Heart left ventricle (tissue), 16 donors: ENCODE measurements at regions of chr1 and their contacts with region 1.

Region 1: DNA sequence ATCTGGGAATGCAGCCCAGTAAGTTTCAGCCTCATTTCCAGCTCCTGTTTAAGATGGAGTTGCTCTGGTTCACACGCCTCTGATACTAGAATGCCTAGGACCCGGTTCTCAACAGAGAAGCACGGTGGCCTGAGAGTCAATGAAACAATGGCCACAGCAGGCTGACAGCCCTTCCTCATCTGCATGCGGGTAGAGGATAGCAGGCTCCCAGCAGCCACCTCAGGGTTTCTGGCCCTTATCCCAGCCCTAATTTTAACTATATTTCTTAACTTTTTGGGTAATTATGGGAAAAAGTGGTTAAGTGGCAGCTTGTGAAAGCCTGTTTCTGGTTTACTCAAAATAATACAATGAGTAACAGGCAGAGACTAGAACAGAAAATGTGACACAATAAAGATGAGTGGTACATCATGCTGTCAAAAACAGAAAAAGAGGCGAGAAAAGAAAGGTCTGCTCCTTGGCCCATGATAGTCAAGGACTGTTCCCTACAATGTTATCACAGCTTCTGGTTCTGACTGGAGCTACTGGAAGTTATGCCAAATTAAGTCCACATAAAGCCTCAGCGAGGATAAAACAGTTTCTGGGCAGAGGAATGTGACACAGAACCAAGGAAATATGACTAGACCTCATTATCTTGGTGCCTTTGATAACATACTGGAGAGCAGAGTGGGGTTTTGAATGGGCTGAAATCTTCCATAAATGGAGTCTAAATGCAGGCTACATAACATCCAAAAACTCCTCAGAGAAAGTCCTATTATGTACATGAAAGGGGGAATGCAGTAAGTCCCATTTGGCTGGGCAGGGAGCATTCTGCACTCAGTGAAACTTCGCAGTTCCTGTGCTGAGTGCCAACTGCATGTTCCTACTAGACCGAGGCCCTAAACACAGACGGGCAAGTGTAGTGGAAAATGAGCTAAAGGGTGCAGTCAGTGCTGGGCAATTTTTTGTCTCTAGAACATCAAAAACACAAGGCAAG is 92.1 kb downstream of the NIBAN1 start:
- DNase-seq: peak in 4 of 5 donors; percentile 44 to 63 (median 60)
- ATAC-seq: peak; percentile 77 to 86 (median 82)
- H3K4me3 ChIP-seq: peak overlapping the region in 1 of 12 donors; percentile 3
- H3K27ac ChIP-seq: peak overlapping the region; percentile 52 to 91 (median 78)
- H3K4me1 ChIP-seq: peaks cover 3 to 97% (median 64%) of the 10 kb centered on the region in 12 donors
- H3K27me3 ChIP-seq: no peaks in the 10 kb centered on the region
- CTCF ChIP-seq: no peak
- POLR2A ChIP-seq: no peak

Region 2: GRCh38 chr1:184838489-184838951 is 43.7 kb before region 1 on chr1:
- intact Hi-C with region 1: no loop called
- DNase-seq: peak in 3 of 5 donors; percentile 44 to 66 (median 53)
- ATAC-seq: peak; percentile 74 to 92 (median 87)
- H3K4me3 ChIP-seq: no peak overlapping the region
- H3K27ac ChIP-seq: peak overlapping the region; percentile 14 to 87 (median 74)
- H3K4me1 ChIP-seq: peaks cover 0 to 61% (median 33%) of the 10 kb centered on the region in 12 donors
- H3K27me3 ChIP-seq: no peaks in the 10 kb centered on the region
- CTCF ChIP-seq: peak in 1 of 12 donors; percentile 9
- POLR2A ChIP-seq: no peak

Region 3: DNA sequence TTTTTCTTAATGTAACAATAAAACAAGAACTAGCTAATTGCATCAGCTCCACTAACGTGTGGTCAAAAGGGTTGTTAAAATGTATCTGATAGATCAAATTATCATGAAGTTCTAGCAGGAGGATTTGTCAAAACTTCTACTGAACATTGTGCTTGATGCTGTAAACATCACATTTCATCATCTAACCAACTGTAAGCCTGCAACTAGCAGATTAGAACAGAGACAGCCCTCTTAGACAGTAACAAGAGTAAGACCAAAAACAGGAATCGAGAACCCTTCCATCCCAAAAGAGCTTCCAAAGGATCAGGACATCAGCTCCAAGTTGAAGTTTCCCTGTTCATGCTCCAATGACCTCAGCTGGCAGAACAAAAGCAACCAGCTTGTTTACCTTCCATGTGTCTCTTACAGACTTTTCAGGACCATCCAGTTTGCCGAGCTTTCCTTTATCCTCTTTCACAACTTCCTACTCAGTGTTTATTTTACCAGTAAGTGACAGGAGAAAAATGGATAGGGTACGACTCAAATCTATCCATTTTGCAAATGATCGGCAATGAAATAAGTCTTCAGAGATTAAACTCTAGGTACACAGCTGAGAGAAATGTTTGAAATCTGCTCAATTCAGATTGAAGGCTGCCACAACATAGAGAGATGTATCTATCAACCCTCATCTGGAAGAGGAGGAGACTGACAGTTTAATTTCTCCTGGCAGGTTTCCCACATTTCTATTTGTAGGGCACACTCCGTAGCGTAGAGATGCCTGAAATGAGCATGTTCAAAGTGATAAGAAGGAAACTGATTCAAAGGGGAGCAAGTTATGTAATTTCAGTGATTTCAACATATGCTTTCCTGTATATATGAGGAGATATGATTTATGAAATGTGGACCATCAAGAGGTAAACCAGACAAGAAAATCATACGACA is 47.7 kb after region 1 on chr1:
- intact Hi-C with region 1: loop called in 1 of 10 experiments (anchors 5 kb)
- DNase-seq: no peak
- ATAC-seq: peak in 3 of 4 donors; percentile 16 to 53 (median 40)
- H3K4me3 ChIP-seq: no peak overlapping the region
- H3K27ac ChIP-seq: peak overlapping the region in 7 of 12 donors; percentile 17 to 53 (median 27)
- H3K4me1 ChIP-seq: peaks cover 0 to 52% (median 16%) of the 10 kb centered on the region in 12 donors
- H3K27me3 ChIP-seq: no peaks in the 10 kb centered on the region
- CTCF ChIP-seq: no peak
- POLR2A ChIP-seq: no peak

Region 4: GRCh38 chr1:184954231-184954995 is 72.2 kb after region 1 on chr1:
- intact Hi-C with region 1: loop called in 3 of 10 experiments (anchors 5 to 10 kb)
- DNase-seq: no peak
- ATAC-seq: peak in 3 of 4 donors; percentile 37 to 42 (median 41)
- H3K4me3 ChIP-seq: no peak overlapping the region
- H3K27ac ChIP-seq: peak overlapping the region; percentile 24 to 77 (median 58)
- H3K4me1 ChIP-seq: peaks cover 0 to 66% (median 28%) of the 10 kb centered on the region in 12 donors
- H3K27me3 ChIP-seq: no peaks in the 10 kb centered on the region
- CTCF ChIP-seq: peak in 1 of 12 donors; percentile 10
- POLR2A ChIP-seq: no peak

Region 5: DNA sequence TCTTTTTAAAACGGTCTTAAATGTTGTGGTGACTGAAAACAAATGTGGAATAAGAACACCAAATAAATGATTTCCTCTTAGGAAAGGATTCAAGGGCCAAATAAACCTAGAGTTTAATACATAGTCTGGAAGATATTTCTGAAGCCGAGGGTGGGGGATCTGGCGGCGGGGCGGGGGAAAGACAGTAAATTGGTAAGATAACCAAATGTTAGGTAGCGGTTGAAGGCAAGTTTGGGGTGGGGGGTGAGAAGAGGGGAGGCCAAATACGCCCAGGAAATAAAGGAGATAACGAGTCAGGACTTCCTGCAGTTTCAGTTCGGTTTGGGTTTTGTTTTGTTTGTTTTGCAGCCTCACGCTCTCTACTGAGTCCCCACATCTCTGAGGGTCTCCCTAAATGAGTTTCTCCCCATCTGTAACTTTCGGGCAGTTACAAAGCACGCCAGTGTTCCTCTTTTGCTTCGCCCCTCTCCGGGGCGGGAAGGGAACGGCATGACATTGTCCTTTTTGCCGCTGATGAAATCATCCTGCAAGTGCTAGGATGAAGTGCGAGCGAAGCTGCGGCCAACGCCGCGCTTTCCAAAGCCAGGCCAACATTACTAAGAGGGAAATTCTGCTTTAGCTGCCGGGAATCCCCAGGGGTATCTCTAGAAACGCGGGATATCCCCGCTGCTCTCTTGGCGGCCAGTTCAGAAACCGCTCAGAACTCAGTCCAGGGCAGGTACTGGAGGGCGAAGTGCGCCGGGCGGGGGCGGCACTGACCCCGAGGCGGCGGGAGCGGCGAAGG is 91.2 kb after region 1 on chr1:
- intact Hi-C with region 1: loop called in 5 of 10 experiments (anchors 5 to 10 kb)
- DNase-seq: peak; percentile 51 to 74 (median 68)
- ATAC-seq: peak; percentile 10 to 76 (median 60)
- H3K4me3 ChIP-seq: peak overlapping the region; percentile 65 to 98 (median 83)
- H3K27ac ChIP-seq: peak overlapping the region; percentile 74 to 94 (median 92)
- H3K4me1 ChIP-seq: peaks cover 0 to 52% (median 20%) of the 10 kb centered on the region in 12 donors
- H3K27me3 ChIP-seq: no peaks in the 10 kb centered on the region
- CTCF ChIP-seq: no peak
- POLR2A ChIP-seq: no peak

Region 6: GRCh38 chr1:185017326-185017725 is 135.1 kb after region 1 on chr1:
- intact Hi-C with region 1: no loop called
- DNase-seq: no peak
- ATAC-seq: no peak
- H3K4me3 ChIP-seq: no peak overlapping the region
- H3K27ac ChIP-seq: no peak overlapping the region
- H3K4me1 ChIP-seq: peaks cover 0 to 4% (median 0%) of the 10 kb centered on the region in 12 donors
- H3K27me3 ChIP-seq: no peaks in the 10 kb centered on the region
- CTCF ChIP-seq: no peak
- POLR2A ChIP-seq: no peak